ENCODE measurements at regions of chrX and their contacts with region 1.

Region 1: GRCh38 chrX:108610141-108610540 is 126.2 kb downstream of the IRS4 start:
- DNase-seq: no peak
- ATAC-seq: no peak
- H3K4me3 ChIP-seq: no peak overlapping the region
- H3K27ac ChIP-seq: no peak overlapping the region
- H3K4me1 ChIP-seq: no peaks in the 10 kb centered on the region
- H3K27me3 ChIP-seq: no peaks in the 10 kb centered on the region
- CTCF ChIP-seq: no peak
- EP300 ChIP-seq: no peak
- POLR2A ChIP-seq: no peak
- RAD21 ChIP-seq: no peak

Region 2: DNA sequence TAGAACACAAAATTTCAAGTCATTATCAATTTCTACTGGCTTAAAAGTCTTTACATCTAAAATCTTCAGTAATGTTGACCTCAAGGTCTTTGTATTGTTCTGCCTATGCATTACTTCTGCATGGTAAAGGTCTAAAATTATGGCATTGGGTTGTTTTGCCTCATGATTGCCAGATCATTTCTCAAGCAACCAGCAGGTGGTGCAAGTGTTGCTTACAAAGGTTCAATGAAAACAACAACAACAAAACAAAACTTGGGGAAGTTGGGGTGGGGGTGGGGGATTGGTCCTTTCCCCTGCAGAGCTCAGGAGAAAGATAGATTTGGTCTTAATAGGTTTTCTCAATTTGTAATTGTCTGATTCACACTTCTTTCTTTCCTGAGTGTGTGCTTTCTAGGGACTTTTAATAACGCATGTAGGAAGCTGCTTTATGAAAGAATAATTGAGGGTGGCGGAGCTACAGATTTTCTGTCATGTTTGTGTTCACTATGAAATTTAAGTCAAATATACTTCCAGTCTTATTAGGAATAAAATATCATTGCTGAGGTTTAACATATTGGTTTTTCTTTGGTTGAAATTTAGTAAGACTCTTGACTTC is 25.4 kb before region 1 on chrX:
- CTCF ChIA-PET with region 1: interaction called, 10 read pairs
- POLR2A ChIA-PET with region 1: no interaction called
- RAD21 ChIA-PET with region 1: no interaction called
- SMC1A ChIA-PET with region 1: interaction called, 4 read pairs
- in situ Hi-C with region 1: no loop called
- intact Hi-C with region 1: no loop called
- DNase-seq: peak; percentile 1
- ATAC-seq: peak; percentile 53
- H3K4me3 ChIP-seq: no peak overlapping the region
- H3K27ac ChIP-seq: no peak overlapping the region
- H3K4me1 ChIP-seq: no peaks in the 10 kb centered on the region
- H3K27me3 ChIP-seq: no peaks in the 10 kb centered on the region
- CTCF ChIP-seq: peak; percentile 46 to 60 (median 52); a peak in 5 of 6 replicates
- EP300 ChIP-seq: no peak
- POLR2A ChIP-seq: no peak
- RAD21 ChIP-seq: peak; percentile 75